ENCODE measurements at regions of chr18 and their contacts with region 1.

Region 1: GRCh38 chr18:20966795-20967194 is 144.8 kb downstream of the ROCK1 start:
- DNase-seq: no peak
- ATAC-seq: no peak
- H3K4me3 ChIP-seq: no peak overlapping the region
- H3K27ac ChIP-seq: no peak overlapping the region
- H3K4me1 ChIP-seq: no peaks in the 10 kb centered on the region
- H3K27me3 ChIP-seq: no peaks in the 10 kb centered on the region
- CTCF ChIP-seq: no peak

Region 2: DNA sequence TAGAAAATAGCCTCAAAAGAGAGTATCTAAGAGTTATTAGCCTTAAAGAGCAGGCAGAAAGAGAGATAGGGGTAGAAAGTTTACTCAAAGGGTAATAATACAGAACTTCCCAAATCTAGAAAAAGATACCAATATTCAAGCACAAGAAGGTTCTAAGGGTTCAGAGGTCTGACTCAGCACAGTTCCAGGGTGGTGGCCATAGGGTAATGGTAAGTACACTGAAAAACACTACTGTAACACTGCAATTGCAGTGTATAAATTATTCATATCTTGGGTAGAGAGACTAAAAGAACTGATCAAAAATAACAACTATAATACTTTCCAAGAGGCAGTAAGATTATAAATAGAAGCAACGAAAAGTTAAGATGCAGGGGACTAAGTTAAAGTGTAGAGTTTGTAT is 29.6 kb after region 1 on chr18:
- CTCF ChIA-PET with region 1: no interaction called
- POLR2A ChIA-PET with region 1: no interaction called
- intact Hi-C with region 1: no loop called
- DNase-seq: no peak
- ATAC-seq: no peak
- H3K4me3 ChIP-seq: no peak overlapping the region
- H3K27ac ChIP-seq: no peak overlapping the region
- H3K4me1 ChIP-seq: peaks cover 12% of the 10 kb centered on the region
- H3K27me3 ChIP-seq: no peaks in the 10 kb centered on the region
- CTCF ChIP-seq: no peak

Region 3: DNA sequence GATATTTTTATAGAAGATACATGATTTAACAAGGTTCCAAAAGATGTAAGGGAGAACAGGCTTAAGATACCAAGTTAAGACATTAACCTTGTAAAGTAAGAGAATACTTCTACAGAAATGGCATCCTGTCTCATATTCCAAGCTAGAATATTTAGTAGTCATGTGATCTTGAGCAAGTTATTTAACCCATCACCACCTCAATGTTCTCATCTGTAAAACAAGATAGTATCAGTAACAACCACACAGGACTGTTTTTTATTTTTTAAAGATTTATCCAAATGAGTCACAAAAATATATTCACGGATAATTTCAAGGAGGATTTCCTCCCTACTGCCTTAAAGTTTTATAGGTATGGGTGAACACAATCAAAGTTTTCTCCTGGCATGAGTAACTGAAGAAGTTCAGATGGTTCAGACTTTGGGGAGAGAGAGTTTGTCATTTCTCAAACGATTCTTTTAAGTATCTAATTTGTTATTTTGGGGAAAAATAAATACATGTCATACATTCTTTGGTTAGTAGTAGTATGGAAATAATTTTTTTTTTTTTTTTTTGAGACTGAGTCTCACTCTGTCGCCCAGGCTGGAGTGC is 118.9 kb after region 1 on chr18:
- CTCF ChIA-PET with region 1: no interaction called
- POLR2A ChIA-PET with region 1: no interaction called
- intact Hi-C with region 1: no loop called
- DNase-seq: peak; percentile 31
- ATAC-seq: peak; percentile 64
- H3K4me3 ChIP-seq: no peak overlapping the region
- H3K27ac ChIP-seq: no peak overlapping the region
- H3K4me1 ChIP-seq: peaks cover 4% of the 10 kb centered on the region; the same call in 1 of the 2 replicates
- H3K27me3 ChIP-seq: no peaks in the 10 kb centered on the region
- CTCF ChIP-seq: no peak

Region 4: DNA sequence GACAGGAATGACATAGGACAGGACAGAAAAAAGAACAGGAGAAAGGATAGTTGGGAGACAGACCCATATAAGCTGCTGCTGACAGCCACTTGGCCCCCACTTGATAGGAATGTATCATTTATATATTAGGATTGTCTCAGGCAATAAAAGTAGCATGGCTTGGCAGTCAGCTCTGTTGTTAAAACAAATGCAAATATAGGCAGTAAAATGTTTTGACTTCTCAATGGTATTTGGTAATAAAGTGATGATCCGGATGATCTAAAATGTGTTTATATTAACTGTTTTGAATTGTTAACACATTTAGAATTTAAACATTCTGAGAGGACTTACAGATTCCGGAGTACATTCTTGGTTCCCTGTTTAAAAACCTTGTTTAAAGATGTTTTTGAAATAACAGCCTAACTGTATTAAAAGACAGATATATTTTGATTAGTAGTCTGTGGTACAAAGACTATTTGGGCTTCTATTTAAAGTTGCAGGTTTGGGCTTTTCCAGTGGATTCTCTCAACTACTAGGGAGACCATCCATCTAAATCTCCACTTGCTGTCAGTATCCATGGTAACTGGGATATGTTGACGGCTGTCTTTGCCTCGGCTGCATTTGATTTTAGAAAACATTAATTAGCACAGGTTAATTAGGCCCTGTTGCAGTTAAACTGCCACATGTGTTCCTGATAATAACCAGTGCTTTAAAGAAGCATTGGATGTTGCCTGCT is 486.2 kb after region 1 on chr18:
- CTCF ChIA-PET with region 1: no interaction called
- POLR2A ChIA-PET with region 1: no interaction called
- intact Hi-C with region 1: loop called (anchors 10 kb)
- DNase-seq: no peak
- ATAC-seq: peak; percentile 73
- H3K4me3 ChIP-seq: no peak overlapping the region
- H3K27ac ChIP-seq: peak overlapping the region; percentile 39
- H3K4me1 ChIP-seq: peaks cover 15% of the 10 kb centered on the region
- H3K27me3 ChIP-seq: no peaks in the 10 kb centered on the region
- CTCF ChIP-seq: no peak